CD8-positive, alpha-beta T cell (primary cell): ENCODE measurements at regions of chr17 and their contacts with region 1.

Region 1: GRCh38 chr17:64599187-64599676 is 62.9 kb downstream of the SMURF2 start:
- DNase-seq: peak; percentile 13 to 77 (median 60)
- ATAC-seq: peak; percentile 95
- H3K4me3 ChIP-seq: peak overlapping the region in 1 of 2 experiments; percentile 2
- H3K4me3 Mint-ChIP-seq: peak overlapping the region; percentile 72
- H3K27ac ChIP-seq: peak overlapping the region in 1 of 2 experiments; percentile 69
- H3K27ac Mint-ChIP-seq: peak overlapping the region; percentile 94
- H3K4me1 ChIP-seq: peaks cover 16% of the 10 kb centered on the region
- H3K4me1 Mint-ChIP-seq: peaks cover 42% of the 10 kb centered on the region
- H3K27me3 ChIP-seq: no peaks in the 10 kb centered on the region
- H3K27me3 Mint-ChIP-seq: no peaks in the 10 kb centered on the region
- CTCF ChIP-seq: no peak

Region 2: GRCh38 chr17:64534175-64534574 is 65.1 kb before region 1 on chr17:
- CTCF ChIA-PET with region 1: no interaction called
- POLR2A ChIA-PET with region 1: no interaction called
- intact Hi-C with region 1: no loop called
- DNase-seq: peak in 2 of 9 experiments; percentile 11 to 24
- ATAC-seq: peak; percentile 34
- H3K4me3 ChIP-seq: no peak overlapping the region
- H3K4me3 Mint-ChIP-seq: no peak overlapping the region
- H3K27ac ChIP-seq: no peak overlapping the region
- H3K27ac Mint-ChIP-seq: no peak overlapping the region
- H3K4me1 ChIP-seq: no peaks in the 10 kb centered on the region
- H3K4me1 Mint-ChIP-seq: no peaks in the 10 kb centered on the region
- H3K27me3 ChIP-seq: no peaks in the 10 kb centered on the region
- H3K27me3 Mint-ChIP-seq: no peaks in the 10 kb centered on the region
- CTCF ChIP-seq: no peak

Region 3: GRCh38 chr17:64582879-64583632 is 16.2 kb before region 1 on chr17:
- CTCF ChIA-PET with region 1: no interaction called
- POLR2A ChIA-PET with region 1: no interaction called
- intact Hi-C with region 1: loop called in 1 of 2 experiments (anchors 1 kb)
- DNase-seq: no peak
- ATAC-seq: no peak
- H3K4me3 ChIP-seq: no peak overlapping the region
- H3K4me3 Mint-ChIP-seq: no peak overlapping the region
- H3K27ac ChIP-seq: no peak overlapping the region
- H3K27ac Mint-ChIP-seq: no peak overlapping the region
- H3K4me1 ChIP-seq: no peaks in the 10 kb centered on the region
- H3K4me1 Mint-ChIP-seq: peaks cover 6% of the 10 kb centered on the region
- H3K27me3 ChIP-seq: no peaks in the 10 kb centered on the region
- H3K27me3 Mint-ChIP-seq: no peaks in the 10 kb centered on the region
- CTCF ChIP-seq: no peak